GM12878 (cell line): ENCODE measurements at regions of chr5 and their contacts with region 1.

Region 1: DNA sequence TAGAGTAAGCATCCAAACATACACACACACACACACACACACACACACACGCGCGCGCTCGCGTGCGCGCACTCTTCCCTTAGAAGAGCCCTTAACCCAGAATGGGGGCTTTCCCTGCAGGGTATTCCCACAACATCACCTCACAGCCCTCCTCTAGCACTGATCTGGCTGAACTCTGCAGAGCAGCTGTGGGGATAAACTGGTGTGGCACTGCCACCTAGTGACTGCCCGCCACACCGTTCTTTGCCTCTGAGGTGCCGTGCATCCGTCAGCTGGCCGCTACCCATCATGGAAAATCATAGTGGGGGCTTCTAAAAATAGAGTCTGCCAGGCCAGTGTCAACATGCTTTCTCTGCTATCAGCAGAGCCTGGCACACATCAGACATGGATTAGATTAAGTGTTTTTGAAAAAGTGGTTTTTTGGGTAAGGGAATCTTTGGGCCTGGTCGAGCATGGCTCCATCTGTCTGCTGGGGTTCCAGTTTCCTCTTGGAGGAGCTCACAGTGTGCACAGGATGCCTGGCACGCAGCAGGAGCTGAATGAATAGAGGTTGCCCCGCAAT is 88.1 kb downstream of the KCNN2 start:
- DNase-seq: peak; percentile 60
- ATAC-seq: peak; percentile 97
- H3K4me3 ChIP-seq: no peak overlapping the region
- H3K27ac ChIP-seq: no peak overlapping the region
- H3K4me1 ChIP-seq: no peaks in the 10 kb centered on the region
- H3K27me3 ChIP-seq: no peaks in the 10 kb centered on the region
- CTCF ChIP-seq: peak; percentile 84 to 98 (median 89)
- EP300 ChIP-seq: no peak
- POLR2A ChIP-seq: no peak
- RAD21 ChIP-seq: peak; percentile 87

Region 2: GRCh38 chr5:113678924-113679575 is 770.9 kb before region 1 on chr5:
- CTCF ChIA-PET with region 1: interaction called, 42 read pairs
- POLR2A ChIA-PET with region 1: no interaction called
- RAD21 ChIA-PET with region 1: interaction called, 6 read pairs
- SMC1A ChIA-PET with region 1: interaction called, 35 read pairs
- in situ Hi-C with region 1: loop called (anchors 5 kb)
- intact Hi-C with region 1: loop called (anchors 2 kb)
- DNase-seq: peak; percentile 8
- ATAC-seq: peak; percentile 96
- H3K4me3 ChIP-seq: no peak overlapping the region
- H3K27ac ChIP-seq: no peak overlapping the region
- H3K4me1 ChIP-seq: no peaks in the 10 kb centered on the region
- H3K27me3 ChIP-seq: no peaks in the 10 kb centered on the region
- CTCF ChIP-seq: peak; percentile 66 to 83 (median 68)
- EP300 ChIP-seq: no peak
- POLR2A ChIP-seq: no peak
- RAD21 ChIP-seq: peak; percentile 97

Region 3: DNA sequence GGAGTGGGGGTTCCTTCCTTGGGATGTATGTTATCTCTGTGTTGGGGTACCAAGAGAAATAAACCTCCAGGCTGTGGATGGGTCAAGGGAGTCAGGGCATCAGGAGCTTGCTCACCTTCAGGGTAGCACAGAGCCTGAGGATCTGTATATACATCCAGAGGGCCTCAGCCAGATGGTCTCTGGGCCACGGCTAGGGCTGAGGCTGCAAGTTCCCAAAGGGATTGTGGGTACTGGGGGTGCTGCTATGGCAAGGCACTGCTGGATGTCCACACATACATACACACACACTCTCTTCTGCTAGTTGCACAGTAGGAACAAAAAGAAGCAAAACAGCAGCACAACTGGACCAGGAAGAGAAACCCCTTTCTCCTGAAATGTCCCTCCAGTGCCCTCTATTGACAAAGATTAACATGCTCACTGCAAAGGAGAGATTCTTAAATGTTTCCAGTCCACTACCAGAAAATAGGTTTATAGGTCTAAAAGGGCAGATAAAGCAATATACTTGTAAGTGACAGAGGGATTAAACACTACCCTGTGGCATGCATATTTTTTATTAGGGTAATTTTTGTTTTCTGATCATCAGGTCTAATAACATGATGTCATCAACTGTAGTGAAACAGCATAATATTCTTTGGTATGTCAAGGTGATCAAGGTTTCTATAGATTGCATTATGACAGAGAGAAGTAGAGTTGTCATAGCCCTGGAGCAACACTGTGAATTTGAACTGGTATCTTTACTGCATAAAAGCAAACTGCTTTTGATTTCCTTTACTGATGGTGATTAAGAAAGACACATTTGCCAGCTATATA is 144.3 kb before region 1 on chr5:
- CTCF ChIA-PET with region 1: interaction called, 6 read pairs
- POLR2A ChIA-PET with region 1: no interaction called
- RAD21 ChIA-PET with region 1: interaction called, 8 read pairs
- SMC1A ChIA-PET with region 1: interaction called, 9 read pairs
- in situ Hi-C with region 1: no loop called
- intact Hi-C with region 1: loop called (anchors 5 kb)
- DNase-seq: no peak
- ATAC-seq: peak; percentile 87
- H3K4me3 ChIP-seq: no peak overlapping the region
- H3K27ac ChIP-seq: no peak overlapping the region
- H3K4me1 ChIP-seq: no peaks in the 10 kb centered on the region
- H3K27me3 ChIP-seq: no peaks in the 10 kb centered on the region; a peak in 1 of 4 replicates
- CTCF ChIP-seq: peak; percentile 38 to 50 (median 43); a peak in 4 of 6 replicates
- EP300 ChIP-seq: no peak
- POLR2A ChIP-seq: no peak
- RAD21 ChIP-seq: peak; percentile 51

Region 4: DNA sequence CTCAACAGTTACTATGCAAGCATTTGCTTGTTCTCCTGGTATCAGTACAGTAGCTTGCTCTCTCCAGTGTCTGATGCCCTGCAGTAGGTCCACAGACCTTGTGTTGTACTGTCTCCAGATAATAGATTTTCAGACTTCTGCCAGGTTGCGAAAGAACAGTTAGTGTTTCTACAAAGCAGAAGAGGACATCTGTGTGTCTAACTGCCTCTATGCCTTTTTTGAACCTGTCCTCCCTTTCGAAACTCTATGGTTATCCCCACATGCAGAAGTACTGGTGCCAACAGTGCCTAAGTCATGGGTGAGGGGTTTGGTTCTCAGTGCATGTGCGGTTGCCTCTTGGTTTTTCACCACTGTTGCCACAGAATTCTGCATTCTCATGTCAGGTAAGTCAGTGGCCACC is 42.2 kb before region 1 on chr5:
- CTCF ChIA-PET with region 1: interaction called, 5 read pairs
- POLR2A ChIA-PET with region 1: interaction called, 5 read pairs
- RAD21 ChIA-PET with region 1: interaction called, 6 read pairs
- SMC1A ChIA-PET with region 1: interaction called, 18 read pairs
- in situ Hi-C with region 1: no loop called
- intact Hi-C with region 1: no loop called
- DNase-seq: peak; percentile 34
- ATAC-seq: peak; percentile 60
- H3K4me3 ChIP-seq: no peak overlapping the region
- H3K27ac ChIP-seq: no peak overlapping the region
- H3K4me1 ChIP-seq: no peaks in the 10 kb centered on the region
- H3K27me3 ChIP-seq: no peaks in the 10 kb centered on the region
- CTCF ChIP-seq: no peak
- EP300 ChIP-seq: no peak
- POLR2A ChIP-seq: no peak
- RAD21 ChIP-seq: no peak

Region 5: DNA sequence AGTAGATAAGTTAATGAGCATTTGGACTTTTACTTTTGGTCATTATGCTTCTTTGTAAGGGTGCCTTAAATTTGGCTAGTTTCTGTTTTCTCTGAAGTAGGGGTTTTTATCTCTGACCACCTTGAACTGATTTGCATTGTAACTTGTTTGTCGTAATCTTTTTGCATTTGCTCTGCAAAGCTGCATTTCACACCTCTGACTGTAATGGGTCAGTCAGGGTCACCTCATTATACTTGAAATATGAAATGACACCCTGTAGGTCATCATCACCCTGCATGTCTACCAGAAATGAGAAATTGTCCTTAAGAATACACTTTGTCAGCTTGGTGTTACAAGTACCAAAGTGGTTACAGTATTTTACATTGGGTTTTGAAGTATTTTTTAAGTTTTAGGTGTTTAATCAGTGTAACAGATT is 14.0 kb before region 1 on chr5:
- CTCF ChIA-PET with region 1: interaction called, 98 read pairs
- POLR2A ChIA-PET with region 1: interaction called, 10 read pairs
- RAD21 ChIA-PET with region 1: interaction called, 148 read pairs
- SMC1A ChIA-PET with region 1: interaction called, 172 read pairs
- in situ Hi-C with region 1: no loop called
- intact Hi-C with region 1: no loop called
- DNase-seq: peak; percentile 73
- ATAC-seq: peak; percentile 84
- H3K4me3 ChIP-seq: no peak overlapping the region
- H3K27ac ChIP-seq: no peak overlapping the region
- H3K4me1 ChIP-seq: no peaks in the 10 kb centered on the region; the same call in 1 of the 2 replicates
- H3K27me3 ChIP-seq: no peaks in the 10 kb centered on the region
- CTCF ChIP-seq: no peak
- EP300 ChIP-seq: peak; percentile 69 to 82; a peak in 2 of 4 replicates
- POLR2A ChIP-seq: no peak
- RAD21 ChIP-seq: no peak

Region 6: DNA sequence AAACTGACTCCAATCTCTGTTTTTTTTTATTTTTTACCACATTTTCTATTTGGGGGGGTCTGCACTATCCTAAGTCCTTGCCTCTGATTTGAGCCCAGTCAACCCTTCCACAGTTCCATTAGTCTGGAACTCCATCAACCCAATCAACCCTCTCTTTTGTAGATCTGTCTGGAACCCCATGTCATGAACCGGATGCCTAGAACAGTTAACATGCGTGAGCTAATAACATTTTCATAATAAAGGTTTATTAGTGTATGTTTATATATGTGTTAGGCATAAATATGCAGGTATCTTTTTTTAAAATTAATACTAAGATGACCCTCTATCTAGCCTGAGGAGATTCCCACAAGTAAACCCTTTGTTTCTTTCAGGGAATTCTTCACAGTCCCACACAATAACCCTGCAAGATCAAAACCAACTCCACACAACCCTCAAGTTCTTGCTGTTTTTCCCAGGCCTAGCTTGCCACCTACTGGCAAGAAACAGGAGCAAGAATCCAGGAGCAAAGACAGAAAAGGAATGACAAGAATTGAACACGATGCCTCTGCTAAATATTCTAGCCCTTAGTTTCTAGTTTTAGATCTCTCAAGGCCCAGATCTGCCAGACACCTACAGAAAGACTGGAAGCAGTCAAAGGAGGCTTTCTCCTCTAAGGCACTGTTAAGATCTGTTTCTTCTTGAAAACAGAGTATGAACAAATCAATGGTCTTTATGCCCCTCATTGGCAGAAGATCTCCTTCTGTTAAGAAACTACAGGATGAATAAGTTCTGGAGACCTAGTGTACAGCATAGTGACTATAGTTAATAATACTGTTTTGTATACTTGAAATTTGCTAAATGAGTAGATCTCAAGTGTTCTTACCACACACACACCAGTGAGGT is 619.4 kb after region 1 on chr5:
- CTCF ChIA-PET with region 1: interaction called, 5 read pairs
- POLR2A ChIA-PET with region 1: no interaction called
- RAD21 ChIA-PET with region 1: interaction called, 5 read pairs
- SMC1A ChIA-PET with region 1: interaction called, 6 read pairs
- in situ Hi-C with region 1: no loop called
- intact Hi-C with region 1: loop called (anchors 5 kb)
- DNase-seq: peak; percentile 12
- ATAC-seq: peak; percentile 70
- H3K4me3 ChIP-seq: no peak overlapping the region
- H3K27ac ChIP-seq: peak overlapping the region; percentile 48; the same call in 1 of the 2 replicates
- H3K4me1 ChIP-seq: no peaks in the 10 kb centered on the region
- H3K27me3 ChIP-seq: no peaks in the 10 kb centered on the region
- CTCF ChIP-seq: peak; percentile 24 to 43 (median 43); a peak in 5 of 6 replicates
- EP300 ChIP-seq: no peak
- POLR2A ChIP-seq: no peak
- RAD21 ChIP-seq: peak; percentile 63